ENCODE measurements at regions of chr6 and their contacts with region 1.

Region 1: GRCh38 chr6:100880853-100881706 is at the start of gene ASCC3:
- DNase-seq: peak; percentile 63
- ATAC-seq: peak; percentile 96
- H3K4me3 ChIP-seq: peak within 1 kb of the TSS; percentile 89
- H3K27ac ChIP-seq: peak within 1 kb of the TSS; percentile 81
- H3K4me1 ChIP-seq: no peaks in the 10 kb centered on the region
- H3K27me3 ChIP-seq: no peaks in the 10 kb centered on the region
- CTCF ChIP-seq: no peak
- EP300 ChIP-seq: no peak
- POLR2A ChIP-seq: peak; percentile 98
- RAD21 ChIP-seq: no peak
- polyA plus RNA-seq, gene ASCC3: 19.9 to 22.2 TPM

Region 2: GRCh38 chr6:100865525-100865924 is 15.6 kb before region 1 on chr6:
- CTCF ChIA-PET with region 1: interaction called, 4 read pairs
- POLR2A ChIA-PET with region 1: interaction called, 21 read pairs
- RAD21 ChIA-PET with region 1: interaction called, 4 read pairs
- SMC1A ChIA-PET with region 1: interaction called, 16 read pairs
- in situ Hi-C with region 1: no loop called
- intact Hi-C with region 1: no loop called
- DNase-seq: no peak
- ATAC-seq: no peak
- H3K4me3 ChIP-seq: no peak overlapping the region
- H3K27ac ChIP-seq: no peak overlapping the region
- H3K4me1 ChIP-seq: no peaks in the 10 kb centered on the region
- H3K27me3 ChIP-seq: no peaks in the 10 kb centered on the region
- CTCF ChIP-seq: no peak
- EP300 ChIP-seq: no peak
- POLR2A ChIP-seq: no peak
- RAD21 ChIP-seq: no peak

Region 3: GRCh38 chr6:100959280-100959679 is 78.2 kb after region 1 on chr6:
- CTCF ChIA-PET with region 1: no interaction called
- POLR2A ChIA-PET with region 1: no interaction called
- RAD21 ChIA-PET with region 1: no interaction called
- SMC1A ChIA-PET with region 1: no interaction called
- in situ Hi-C with region 1: no loop called
- intact Hi-C with region 1: no loop called
- DNase-seq: no peak
- ATAC-seq: no peak
- H3K4me3 ChIP-seq: no peak overlapping the region
- H3K27ac ChIP-seq: no peak overlapping the region
- H3K4me1 ChIP-seq: no peaks in the 10 kb centered on the region
- H3K27me3 ChIP-seq: no peaks in the 10 kb centered on the region
- CTCF ChIP-seq: no peak
- EP300 ChIP-seq: no peak
- POLR2A ChIP-seq: no peak
- RAD21 ChIP-seq: no peak